A673 (cell line): ENCODE measurements at regions of chr6 and their contacts with region 1.

Region 1: DNA sequence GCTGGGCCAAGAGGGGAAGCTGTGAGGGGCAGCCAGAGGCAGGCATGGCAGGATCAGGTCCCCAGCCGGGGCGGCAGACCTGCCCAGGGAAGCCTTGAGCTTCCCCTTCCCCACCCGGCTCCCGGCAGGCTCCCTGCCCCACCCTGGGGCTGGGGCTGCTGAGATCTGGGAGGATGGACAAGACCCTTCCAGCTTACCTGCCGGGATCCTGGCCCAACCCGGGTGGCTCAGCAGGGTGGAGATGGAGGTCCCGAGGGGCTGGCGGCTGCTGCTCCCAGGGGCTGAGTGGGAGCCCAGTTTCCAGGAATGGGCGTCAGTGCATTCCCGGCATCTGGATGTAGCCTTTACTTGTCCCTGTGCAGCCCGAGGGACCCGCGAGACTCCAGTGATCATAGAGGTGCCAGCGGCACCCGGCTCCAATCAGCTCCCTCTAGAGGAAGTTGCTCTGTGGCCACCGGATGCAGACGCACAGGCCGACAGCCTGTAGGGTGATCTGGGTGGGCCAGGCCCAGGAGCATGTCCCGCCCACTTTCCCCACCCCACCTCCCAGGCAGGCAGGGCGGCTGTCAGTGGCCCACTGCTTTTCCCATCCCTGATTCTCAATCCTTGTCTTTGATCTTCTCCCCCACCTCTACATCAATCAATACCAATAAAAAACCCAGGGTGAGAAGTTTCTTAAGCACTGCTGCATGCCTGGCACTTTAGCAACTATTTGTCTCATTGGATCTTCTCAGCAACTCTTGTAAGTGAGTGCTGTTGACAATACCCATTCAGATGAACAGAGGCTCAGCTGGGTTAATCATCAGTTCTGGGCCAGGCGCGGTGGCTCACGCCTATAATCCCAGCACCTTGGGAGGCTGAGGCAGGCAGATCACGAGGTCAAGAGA is at the start of gene BAK1:
- DNase-seq: peak; percentile 95
- H3K4me3 ChIP-seq: peak within 1 kb of the TSS; percentile 81
- H3K27ac ChIP-seq: peak within 1 kb of the TSS; percentile 80
- H3K4me1 ChIP-seq: peaks cover 2% of the 10 kb centered on the region
- H3K27me3 ChIP-seq: no peaks in the 10 kb centered on the region
- CTCF ChIP-seq: peak; percentile 64
- total RNA-seq, gene BAK1: 26.4 and 27.1 TPM in 2 replicates

Region 2: GRCh38 chr6:34036357-34037069 is 456.4 kb after region 1 on chr6:
- CTCF ChIA-PET with region 1: no interaction called
- POLR2A ChIA-PET with region 1: no interaction called
- intact Hi-C with region 1: loop called (anchors 10 kb)
- DNase-seq: no peak
- H3K4me3 ChIP-seq: no peak overlapping the region
- H3K27ac ChIP-seq: no peak overlapping the region
- H3K4me1 ChIP-seq: no peaks in the 10 kb centered on the region
- H3K27me3 ChIP-seq: no peaks in the 10 kb centered on the region
- CTCF ChIP-seq: no peak